ENCODE measurements at regions of chr1 and their contacts with region 1.

Region 1: GRCh38 chr1:212678456-212679410 is 20.9 kb downstream of the BATF3 start:
- DNase-seq: no peak
- H3K4me3 ChIP-seq: no peak overlapping the region
- CTCF ChIP-seq: no peak

Region 2: DNA sequence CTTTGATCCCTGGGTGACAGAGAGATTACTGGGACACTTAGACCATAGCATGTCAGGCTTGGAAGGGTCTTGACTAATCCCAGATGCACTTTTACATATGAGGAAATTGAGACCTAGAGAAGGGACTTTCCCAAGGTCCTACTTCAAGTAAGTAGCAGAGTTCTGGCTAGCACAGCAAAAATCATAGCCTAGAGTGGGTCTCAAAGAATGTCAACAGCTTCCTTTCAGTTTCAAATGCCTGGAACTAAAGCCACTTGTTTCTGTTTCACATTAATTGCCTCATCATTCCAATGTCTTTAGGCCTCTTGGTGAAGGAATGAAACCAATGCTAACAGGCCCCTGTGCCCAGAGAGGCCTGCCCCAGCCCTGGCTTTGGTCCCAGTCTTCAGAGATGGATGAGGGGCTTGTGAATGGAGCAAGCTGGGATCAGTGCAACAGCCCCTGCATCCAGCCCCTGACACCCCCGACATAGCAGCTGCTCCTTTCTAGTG is 43.5 kb before region 1 on chr1:
- in situ Hi-C with region 1: no loop called
- DNase-seq: no peak
- H3K4me3 ChIP-seq: no peak overlapping the region
- CTCF ChIP-seq: no peak

Region 3: GRCh38 chr1:212760126-212760823 is 81.5 kb after region 1 on chr1:
- in situ Hi-C with region 1: loop called (anchors 5 kb)
- DNase-seq: no peak
- H3K4me3 ChIP-seq: no peak overlapping the region
- CTCF ChIP-seq: peak; percentile 32

Measured in astrocyte of the cerebellum (primary cell).